PC-3 (cell line): ENCODE measurements at regions of chr16 and their contacts with region 1.

Region 1: DNA sequence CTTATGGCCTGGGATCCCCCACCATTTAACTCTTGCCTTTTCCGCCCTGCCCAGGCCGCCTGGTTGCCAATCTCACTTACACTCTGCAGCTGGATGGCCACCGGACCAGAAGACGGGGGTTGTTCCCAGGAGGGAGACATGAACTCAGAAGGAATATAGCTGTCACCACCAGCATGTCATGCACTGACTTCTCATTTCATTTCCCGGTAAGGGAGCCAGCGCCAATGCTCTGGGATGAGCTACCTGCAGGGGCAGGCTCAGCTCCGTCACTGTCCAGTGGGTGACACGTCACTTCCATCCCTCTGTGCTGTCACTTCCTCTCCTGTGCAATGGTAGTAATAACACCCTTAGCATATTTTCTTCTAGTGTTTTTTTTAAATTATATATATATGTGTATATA is 26.7 kb downstream of the ITGAL start:
- DNase-seq: no peak
- ATAC-seq: no peak
- H3K4me3 ChIP-seq: no peak overlapping the region
- H3K27ac ChIP-seq: no peak overlapping the region
- H3K4me1 ChIP-seq: no peaks in the 10 kb centered on the region
- H3K27me3 ChIP-seq: no peaks in the 10 kb centered on the region
- CTCF ChIP-seq: no peak

Region 2: GRCh38 chr16:30378236-30379204 is 120.8 kb before region 1 on chr16:
- CTCF ChIA-PET with region 1: no interaction called
- POLR2A ChIA-PET with region 1: interaction called, 18 read pairs
- intact Hi-C with region 1: no loop called
- DNase-seq: peak; percentile 94
- ATAC-seq: peak; percentile 95
- H3K4me3 ChIP-seq: peak overlapping the region; percentile 86
- H3K27ac ChIP-seq: peak overlapping the region; percentile 93
- H3K4me1 ChIP-seq: peaks cover 5% of the 10 kb centered on the region; the same call in 1 of the 2 replicates
- H3K27me3 ChIP-seq: no peaks in the 10 kb centered on the region
- CTCF ChIP-seq: no peak

Region 3: DNA sequence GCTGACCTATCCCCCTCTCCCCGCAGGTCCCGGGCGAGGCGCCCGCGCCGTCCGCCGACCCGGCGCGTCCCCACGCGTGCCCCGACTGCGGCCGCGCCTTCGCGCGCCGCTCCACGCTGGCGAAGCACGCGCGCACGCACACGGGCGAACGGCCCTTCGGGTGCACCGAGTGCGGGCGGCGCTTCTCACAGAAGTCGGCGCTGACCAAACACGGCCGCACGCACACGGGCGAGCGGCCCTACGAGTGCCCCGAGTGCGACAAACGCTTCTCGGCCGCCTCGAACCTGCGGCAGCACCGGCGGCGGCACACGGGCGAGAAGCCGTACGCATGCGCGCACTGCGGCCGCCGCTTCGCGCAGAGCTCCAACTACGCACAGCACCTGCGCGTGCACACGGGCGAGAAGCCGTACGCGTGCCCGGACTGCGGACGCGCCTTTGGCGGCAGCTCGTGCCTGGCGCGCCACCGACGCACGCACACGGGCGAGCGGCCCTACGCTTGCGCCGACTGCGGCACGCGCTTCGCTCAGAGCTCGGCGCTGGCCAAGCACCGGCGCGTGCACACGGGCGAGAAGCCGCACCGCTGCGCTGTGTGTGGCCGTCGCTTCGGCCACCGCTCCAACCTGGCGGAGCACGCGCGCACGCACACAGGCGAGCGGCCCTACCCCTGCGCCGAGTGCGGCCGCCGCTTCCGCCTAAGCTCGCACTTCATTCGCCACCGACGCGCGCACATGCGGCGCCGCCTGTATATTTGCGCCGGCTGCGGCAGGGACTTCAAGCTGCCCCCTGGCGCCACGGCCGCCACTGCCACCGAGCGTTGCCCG is 81.5 kb before region 1 on chr16:
- CTCF ChIA-PET with region 1: interaction called, 12 read pairs
- POLR2A ChIA-PET with region 1: no interaction called
- intact Hi-C with region 1: no loop called
- DNase-seq: peak; percentile 94
- ATAC-seq: peak; percentile 94
- H3K4me3 ChIP-seq: peak overlapping the region; percentile 68
- H3K27ac ChIP-seq: no peak overlapping the region
- H3K4me1 ChIP-seq: peaks cover 6% of the 10 kb centered on the region; the same call in 1 of the 2 replicates
- H3K27me3 ChIP-seq: no peaks in the 10 kb centered on the region
- CTCF ChIP-seq: peak; percentile 33; the same call in 1 of the 2 replicates